Heart right ventricle (tissue), 16 donors: ENCODE measurements at regions of chr20 and their contacts with region 1.

Region 1: DNA sequence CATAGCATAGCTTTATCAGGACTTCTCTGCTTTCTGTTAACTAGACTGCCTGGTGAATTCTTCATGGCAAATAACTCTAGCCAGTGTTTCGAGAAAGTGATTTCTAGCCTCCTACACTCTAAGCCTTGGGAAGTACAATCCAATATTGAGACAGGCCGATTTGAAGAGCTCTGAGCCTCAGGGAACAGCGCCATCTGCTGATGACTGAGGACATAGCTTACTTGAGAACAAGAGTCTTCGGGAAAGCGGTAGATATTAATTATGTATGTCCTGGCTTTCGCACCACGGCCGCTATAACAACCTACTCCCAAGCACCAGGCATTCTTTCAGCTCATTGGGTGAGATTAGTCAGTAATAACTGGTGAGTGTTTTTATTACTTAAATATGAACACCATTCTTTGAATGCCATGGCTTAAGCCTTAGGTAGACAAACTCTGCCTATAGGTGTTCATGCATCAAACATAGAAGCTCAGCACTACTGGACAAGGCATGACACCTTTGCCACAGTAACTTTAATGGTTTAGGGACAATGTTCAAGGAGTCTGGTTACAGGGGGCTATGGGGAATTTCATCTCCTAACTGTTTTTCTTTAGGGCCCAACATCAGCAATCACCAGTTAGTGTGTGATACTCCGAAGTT is 518.6 kb downstream of the BMP2 start:
- DNase-seq: peak; percentile 52 to 76
- ATAC-seq: peak; percentile 61 to 88 (median 78)
- H3K4me3 ChIP-seq: no peak overlapping the region
- H3K27ac ChIP-seq: no peak overlapping the region
- H3K4me1 ChIP-seq: peaks cover 0 to 6% (median 0%) of the 10 kb centered on the region in 9 donors
- H3K27me3 ChIP-seq: peaks cover 0 to 10% (median 0%) of the 10 kb centered on the region in 7 donors
- CTCF ChIP-seq: peak; percentile 58 to 90 (median 84)

Region 2: GRCh38 chr20:6142348-6142993 is 1143.6 kb before region 1 on chr20:
- intact Hi-C with region 1: loop called in 3 of 10 experiments (anchors 10 kb)
- DNase-seq: peak in 1 of 2 donors; percentile 49
- ATAC-seq: peak in 5 of 8 donors; percentile 61 to 75 (median 64)
- H3K4me3 ChIP-seq: no peak overlapping the region
- H3K27ac ChIP-seq: no peak overlapping the region
- H3K4me1 ChIP-seq: no peaks in the 10 kb centered on the region
- H3K27me3 ChIP-seq: peaks cover 0 to 18% (median 5%) of the 10 kb centered on the region in 7 donors
- CTCF ChIP-seq: peak; percentile 58 to 91 (median 84)

Region 3: GRCh38 chr20:6265204-6265904 is 1020.7 kb before region 1 on chr20:
- intact Hi-C with region 1: loop called in 1 of 10 experiments (anchors 10 kb)
- DNase-seq: peak in 1 of 2 donors; percentile 35
- ATAC-seq: peak in 7 of 8 donors; percentile 61 to 91 (median 79)
- H3K4me3 ChIP-seq: peak overlapping the region in 4 of 10 donors; percentile 1 to 27 (median 24)
- H3K27ac ChIP-seq: peak overlapping the region in 7 of 10 donors; percentile 1 to 71 (median 55)
- H3K4me1 ChIP-seq: peaks cover 0 to 14% (median 5%) of the 10 kb centered on the region in 9 donors
- H3K27me3 ChIP-seq: peaks cover 0 to 9% (median 0%) of the 10 kb centered on the region in 7 donors
- CTCF ChIP-seq: peak in 7 of 9 donors; percentile 21 to 69 (median 48)

Region 4: GRCh38 chr20:6767536-6768227 is 518.4 kb before region 1 on chr20 and contains the start of gene BMP2:
- intact Hi-C with region 1: loop called in 3 of 10 experiments (anchors 10 kb)
- DNase-seq: peak; percentile 47 to 69
- ATAC-seq: peak; percentile 70 to 88 (median 76)
- H3K4me3 ChIP-seq: peak within 1 kb of the TSS; percentile 66 to 87 (median 78)
- H3K27ac ChIP-seq: peak within 1 kb of the TSS; percentile 39 to 84 (median 72)
- H3K4me1 ChIP-seq: peaks cover 0 to 31% (median 17%) of the 10 kb centered on the region in 9 donors
- H3K27me3 ChIP-seq: peaks cover 0 to 58% (median 0%) of the 10 kb centered on the region in 7 donors
- CTCF ChIP-seq: peak in 2 of 9 donors; percentile 14 to 18
- total RNA-seq, gene BMP2: 0.89 to 3.1 (median 2.4) TPM

Region 5: GRCh38 chr20:7113577-7114466 is 172.2 kb before region 1 on chr20:
- intact Hi-C with region 1: loop called in 8 of 10 experiments (anchors 5 to 10 kb)
- DNase-seq: peak; percentile 17 to 50
- ATAC-seq: peak; percentile 79 to 96 (median 93)
- H3K4me3 ChIP-seq: no peak overlapping the region
- H3K27ac ChIP-seq: no peak overlapping the region
- H3K4me1 ChIP-seq: no peaks in the 10 kb centered on the region
- H3K27me3 ChIP-seq: no peaks in the 10 kb centered on the region
- CTCF ChIP-seq: peak; percentile 33 to 70 (median 54)